ENCODE measurements at regions of chr10 and their contacts with region 1.

Region 1: DNA sequence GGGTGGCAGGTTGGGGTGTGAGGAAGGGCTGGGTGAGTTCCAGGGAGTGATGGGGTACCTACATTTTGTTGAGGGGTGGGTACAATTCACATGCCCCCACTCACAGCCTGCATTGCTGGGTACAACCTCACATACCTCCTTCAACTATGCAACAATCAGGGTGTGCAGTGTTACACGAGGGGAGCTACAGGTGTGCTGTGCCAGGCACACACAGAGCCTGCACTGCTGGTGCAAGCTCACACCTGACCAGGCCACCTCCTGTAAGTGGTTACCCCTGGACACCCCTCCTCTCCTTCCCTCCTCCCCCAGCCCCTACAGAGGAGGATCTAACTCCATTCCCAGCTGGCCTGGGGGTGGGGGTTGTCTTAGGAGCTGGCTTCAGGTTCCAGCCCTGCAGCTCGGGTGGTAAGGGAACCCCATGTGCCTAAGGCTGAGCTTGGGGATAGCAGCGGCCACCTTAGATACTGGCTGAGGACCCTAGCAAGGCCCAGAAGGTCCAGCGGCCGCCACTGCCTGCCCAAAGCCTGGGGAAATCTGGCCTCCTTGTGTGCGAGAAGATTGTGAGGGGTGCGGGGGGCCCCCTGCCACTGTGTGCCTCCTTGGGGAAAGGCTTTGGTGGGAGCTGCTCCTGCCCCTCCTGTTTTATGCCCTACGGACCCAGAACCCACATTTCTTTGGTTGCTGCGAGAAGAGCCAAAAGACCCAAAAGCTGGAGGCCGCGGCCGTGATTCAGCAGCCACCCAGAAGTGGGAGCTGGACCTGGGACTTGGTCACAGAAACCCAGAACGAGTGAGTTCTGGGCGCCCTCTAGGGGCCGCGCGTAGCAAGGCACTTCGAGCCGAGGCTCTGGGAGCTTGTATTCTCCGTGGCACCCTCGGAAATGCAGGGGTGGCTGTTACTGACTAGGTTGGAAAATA is 10.8 kb downstream of the TLX1 start:
- DNase-seq: peak; percentile 85
- H3K4me3 ChIP-seq: no peak overlapping the region
- H3K27ac ChIP-seq: no peak overlapping the region
- H3K4me1 ChIP-seq: no peaks in the 10 kb centered on the region
- CTCF ChIP-seq: peak; percentile 96

Region 2: GRCh38 chr10:101095542-101096213 is 46.2 kb before region 1 on chr10:
- CTCF ChIA-PET with region 1: interaction called, 16 read pairs
- POLR2A ChIA-PET with region 1: no interaction called
- intact Hi-C with region 1: loop called (anchors 1 kb)
- DNase-seq: peak; percentile 72
- H3K4me3 ChIP-seq: no peak overlapping the region
- H3K27ac ChIP-seq: no peak overlapping the region
- H3K4me1 ChIP-seq: peaks cover 8% of the 10 kb centered on the region
- CTCF ChIP-seq: peak; percentile 87

Measured in OCI-LY7 (cell line).